ENCODE measurements at regions of chrX and their contacts with region 1.

Region 1: GRCh38 chrX:101595739-101596419 is 21.9 kb downstream of the ARMCX6 start:
- DNase-seq: peak; percentile 17
- ATAC-seq: peak; percentile 63
- H3K4me3 ChIP-seq: no peak overlapping the region
- H3K27ac ChIP-seq: no peak overlapping the region
- H3K4me1 ChIP-seq: no peaks in the 10 kb centered on the region
- H3K27me3 ChIP-seq: no peaks in the 10 kb centered on the region
- CTCF ChIP-seq: peak; percentile 61
- EP300 ChIP-seq: no peak
- POLR2A ChIP-seq: no peak
- RAD21 ChIP-seq: no peak

Region 2: DNA sequence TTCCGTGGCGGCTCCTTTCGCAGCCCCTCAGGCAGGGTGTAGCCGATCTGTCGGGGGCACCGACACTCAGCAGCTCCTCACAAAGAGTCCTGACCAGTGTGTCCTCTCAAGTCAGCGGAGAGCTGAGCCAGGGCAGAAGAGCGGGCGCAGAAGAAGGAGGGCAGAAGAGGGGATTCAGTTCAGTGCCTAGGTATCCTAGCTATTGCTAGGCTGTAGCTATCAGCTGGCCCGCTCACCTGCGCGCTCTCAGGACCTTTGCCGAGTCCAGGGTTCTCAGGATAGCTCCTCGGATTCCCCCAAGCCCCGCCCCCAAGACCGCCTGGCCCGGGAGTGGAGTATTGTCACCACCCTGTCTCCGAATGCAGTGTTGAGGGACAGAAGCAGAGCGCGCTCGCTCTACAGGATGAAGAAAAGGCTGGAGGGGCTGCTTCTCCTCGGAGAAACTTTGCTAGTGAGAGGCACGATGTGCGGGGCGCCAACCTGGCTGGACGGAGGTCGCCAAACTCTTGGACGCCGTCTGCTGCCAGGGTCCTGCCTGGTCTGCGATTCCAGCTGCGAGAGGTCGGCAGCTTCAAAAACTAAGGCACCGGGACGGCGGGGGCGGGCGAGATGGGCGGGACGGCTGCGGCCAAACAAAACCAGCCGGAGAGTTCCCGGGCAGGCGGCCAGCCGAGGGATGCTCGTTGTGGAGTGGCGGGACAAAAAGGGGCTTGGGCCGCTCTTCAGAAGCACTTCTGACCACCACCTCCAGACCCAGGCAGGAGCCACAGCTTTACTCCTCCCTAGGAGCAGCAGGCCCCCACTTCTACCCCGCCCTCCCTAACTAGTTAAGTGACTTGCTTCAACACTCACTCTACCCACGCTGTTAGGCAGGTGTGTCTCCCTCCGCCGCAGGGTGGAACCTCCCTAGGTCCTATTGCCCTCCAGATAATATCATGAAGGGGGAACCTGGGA is 666.9 kb before region 1 on chrX and contains the start of gene XKRX:
- CTCF ChIA-PET with region 1: no interaction called
- POLR2A ChIA-PET with region 1: no interaction called
- in situ Hi-C with region 1: no loop called
- intact Hi-C with region 1: no loop called
- DNase-seq: no peak
- ATAC-seq: peak; percentile 88
- H3K4me3 ChIP-seq: peak within 1 kb of the TSS; percentile 39 to 58 (median 40); a peak in 5 of 6 replicates
- H3K27ac ChIP-seq: no peak within 1 kb of the TSS
- H3K4me1 ChIP-seq: peaks cover 6% of the 10 kb centered on the region; the same call in 1 of the 2 replicates
- H3K27me3 ChIP-seq: no peaks in the 10 kb centered on the region
- CTCF ChIP-seq: no peak
- EP300 ChIP-seq: no peak
- POLR2A ChIP-seq: no peak
- RAD21 ChIP-seq: no peak
- total RNA-seq, gene XKRX: not detected in 2 replicates

Region 3: DNA sequence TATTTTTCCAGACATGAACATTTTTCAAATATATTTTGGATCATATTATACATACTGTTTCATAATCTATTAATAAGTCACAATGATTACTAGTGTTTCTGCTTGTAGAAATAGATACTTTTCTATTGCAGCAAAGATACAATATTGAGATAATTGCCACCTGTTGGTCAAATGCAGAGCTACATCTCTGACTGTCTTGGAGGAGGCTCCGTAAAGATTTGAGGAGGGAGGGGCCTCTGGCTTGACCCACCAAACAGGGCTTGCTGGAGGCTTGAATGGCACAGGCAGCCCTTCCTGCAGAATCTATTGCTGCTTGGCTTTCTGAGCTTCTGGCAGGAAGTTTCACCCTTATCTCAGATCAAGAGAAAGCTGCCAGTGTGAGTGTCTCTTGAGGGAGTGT is 163.1 kb after region 1 on chrX:
- CTCF ChIA-PET with region 1: interaction called, 4 read pairs
- POLR2A ChIA-PET with region 1: no interaction called
- in situ Hi-C with region 1: no loop called
- intact Hi-C with region 1: loop called (anchors 5 kb)
- DNase-seq: peak; percentile 2
- ATAC-seq: peak; percentile 47; the same call in 1 of the 3 replicates
- H3K4me3 ChIP-seq: no peak overlapping the region
- H3K27ac ChIP-seq: no peak overlapping the region
- H3K4me1 ChIP-seq: no peaks in the 10 kb centered on the region
- H3K27me3 ChIP-seq: no peaks in the 10 kb centered on the region
- CTCF ChIP-seq: peak; percentile 30; the same call in 1 of the 2 replicates
- EP300 ChIP-seq: no peak
- POLR2A ChIP-seq: no peak
- RAD21 ChIP-seq: no peak

Region 4: DNA sequence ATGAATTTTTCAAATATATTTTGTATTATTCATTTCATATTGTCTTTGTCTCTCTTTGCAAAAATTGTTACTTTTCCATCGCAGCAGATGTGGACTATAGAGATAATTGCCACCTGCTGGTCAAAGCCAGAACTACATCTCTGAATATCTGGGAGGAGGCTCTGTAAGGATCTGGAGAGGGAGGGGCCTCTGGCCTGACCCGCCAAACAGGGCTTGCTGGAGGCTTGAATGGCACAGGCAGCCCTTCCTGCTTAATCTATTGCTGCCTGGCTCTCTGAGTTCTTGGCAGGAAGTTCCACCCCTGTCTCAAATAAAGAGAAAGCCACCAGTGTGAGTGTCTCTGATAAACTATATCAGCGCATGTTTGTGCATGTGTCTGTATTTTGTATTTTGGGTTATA is 203.5 kb after region 1 on chrX:
- CTCF ChIA-PET with region 1: interaction called, 4 read pairs
- POLR2A ChIA-PET with region 1: no interaction called
- in situ Hi-C with region 1: no loop called
- intact Hi-C with region 1: loop called (anchors 5 kb)
- DNase-seq: peak; percentile 63
- ATAC-seq: peak; percentile 95
- H3K4me3 ChIP-seq: no peak overlapping the region
- H3K27ac ChIP-seq: no peak overlapping the region
- H3K4me1 ChIP-seq: no peaks in the 10 kb centered on the region
- H3K27me3 ChIP-seq: no peaks in the 10 kb centered on the region
- CTCF ChIP-seq: peak; percentile 56
- EP300 ChIP-seq: no peak
- POLR2A ChIP-seq: no peak
- RAD21 ChIP-seq: no peak

Measured in HepG2 (cell line).